Dendritic cell treated with granulocyte-macrophage colony-stimulating factor and Interleukin-4, amounts not matched to agents 40 ng/mL and 50 ng/mL, for 4 days (primary cell): ENCODE measurements at regions of chr15 and their contacts with region 1.

Region 1: DNA sequence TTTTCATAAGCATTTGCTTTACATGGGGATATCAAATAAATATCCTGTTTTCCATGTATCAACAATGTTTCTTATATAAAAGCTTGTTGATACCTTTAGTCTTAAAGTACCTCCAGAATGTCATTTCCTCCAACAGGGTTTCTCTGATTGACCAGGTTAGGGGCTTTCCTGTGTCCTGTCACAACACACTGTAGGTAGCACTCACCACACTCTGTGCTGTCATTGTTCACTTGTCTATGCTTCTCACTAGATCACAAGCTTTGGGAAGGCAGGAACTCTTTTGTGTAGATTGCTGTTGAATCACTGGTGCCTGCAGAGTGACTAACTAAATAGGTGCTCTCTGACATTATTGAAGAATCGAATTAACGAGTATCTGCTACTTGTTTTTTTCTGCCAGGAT is 49.8 kb downstream of the USP50 start:
- H3K4me3 Mint-ChIP-seq: no peak overlapping the region
- H3K27ac Mint-ChIP-seq: no peak overlapping the region
- H3K4me1 Mint-ChIP-seq: no peaks in the 10 kb centered on the region
- H3K27me3 Mint-ChIP-seq: no peaks in the 10 kb centered on the region

Region 2: DNA sequence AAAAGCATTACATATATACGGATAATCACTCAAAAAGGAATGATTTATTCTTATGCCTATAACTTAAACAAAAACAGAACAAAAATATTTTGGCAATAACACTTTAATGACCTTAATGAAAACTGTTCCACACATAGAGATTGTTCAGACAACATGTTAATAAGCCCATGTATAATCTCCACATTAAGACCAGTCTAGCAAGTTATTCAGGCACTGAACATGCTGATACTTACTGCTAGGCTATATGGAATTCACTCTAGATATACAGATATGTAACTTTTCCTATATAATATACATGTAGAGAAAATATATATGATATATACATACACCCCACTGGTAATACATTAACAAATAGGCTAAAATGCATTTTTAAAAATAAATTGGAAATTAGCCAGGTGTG is 93.6 kb after region 1 on chr15:
- intact Hi-C with region 1: loop called (anchors 10 kb)
- H3K4me3 Mint-ChIP-seq: no peak overlapping the region
- H3K27ac Mint-ChIP-seq: no peak overlapping the region
- H3K4me1 Mint-ChIP-seq: no peaks in the 10 kb centered on the region
- H3K27me3 Mint-ChIP-seq: no peaks in the 10 kb centered on the region

Region 3: DNA sequence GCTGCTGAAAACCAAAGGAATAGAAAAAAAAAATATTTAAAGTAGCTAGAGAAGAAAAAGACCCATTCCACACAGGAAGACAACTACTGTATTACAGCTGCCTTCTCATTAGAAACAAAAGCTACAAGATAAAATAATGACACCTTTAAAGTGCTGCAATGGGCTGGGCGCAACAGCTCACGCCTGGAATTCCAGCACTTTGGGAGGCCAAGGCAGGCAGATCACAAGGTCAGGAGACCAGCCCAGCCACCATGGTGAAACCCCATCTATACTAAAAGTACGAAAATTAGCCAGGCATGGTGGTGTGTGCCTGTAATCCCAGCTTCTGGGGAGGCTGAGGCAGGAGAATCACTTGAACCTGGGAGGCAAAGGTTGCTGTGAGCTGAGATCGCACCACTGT is 158.9 kb after region 1 on chr15:
- intact Hi-C with region 1: no loop called
- H3K4me3 Mint-ChIP-seq: no peak overlapping the region
- H3K27ac Mint-ChIP-seq: no peak overlapping the region
- H3K4me1 Mint-ChIP-seq: no peaks in the 10 kb centered on the region
- H3K27me3 Mint-ChIP-seq: no peaks in the 10 kb centered on the region

Region 4: GRCh38 chr15:51475736-51476135 is 979.0 kb after region 1 on chr15:
- intact Hi-C with region 1: loop called (anchors 10 kb)
- H3K4me3 Mint-ChIP-seq: no peak overlapping the region
- H3K27ac Mint-ChIP-seq: peak overlapping the region; percentile 10
- H3K4me1 Mint-ChIP-seq: no peaks in the 10 kb centered on the region
- H3K27me3 Mint-ChIP-seq: no peaks in the 10 kb centered on the region